ENCODE measurements at regions of chr1 and their contacts with region 1.

Region 1: DNA sequence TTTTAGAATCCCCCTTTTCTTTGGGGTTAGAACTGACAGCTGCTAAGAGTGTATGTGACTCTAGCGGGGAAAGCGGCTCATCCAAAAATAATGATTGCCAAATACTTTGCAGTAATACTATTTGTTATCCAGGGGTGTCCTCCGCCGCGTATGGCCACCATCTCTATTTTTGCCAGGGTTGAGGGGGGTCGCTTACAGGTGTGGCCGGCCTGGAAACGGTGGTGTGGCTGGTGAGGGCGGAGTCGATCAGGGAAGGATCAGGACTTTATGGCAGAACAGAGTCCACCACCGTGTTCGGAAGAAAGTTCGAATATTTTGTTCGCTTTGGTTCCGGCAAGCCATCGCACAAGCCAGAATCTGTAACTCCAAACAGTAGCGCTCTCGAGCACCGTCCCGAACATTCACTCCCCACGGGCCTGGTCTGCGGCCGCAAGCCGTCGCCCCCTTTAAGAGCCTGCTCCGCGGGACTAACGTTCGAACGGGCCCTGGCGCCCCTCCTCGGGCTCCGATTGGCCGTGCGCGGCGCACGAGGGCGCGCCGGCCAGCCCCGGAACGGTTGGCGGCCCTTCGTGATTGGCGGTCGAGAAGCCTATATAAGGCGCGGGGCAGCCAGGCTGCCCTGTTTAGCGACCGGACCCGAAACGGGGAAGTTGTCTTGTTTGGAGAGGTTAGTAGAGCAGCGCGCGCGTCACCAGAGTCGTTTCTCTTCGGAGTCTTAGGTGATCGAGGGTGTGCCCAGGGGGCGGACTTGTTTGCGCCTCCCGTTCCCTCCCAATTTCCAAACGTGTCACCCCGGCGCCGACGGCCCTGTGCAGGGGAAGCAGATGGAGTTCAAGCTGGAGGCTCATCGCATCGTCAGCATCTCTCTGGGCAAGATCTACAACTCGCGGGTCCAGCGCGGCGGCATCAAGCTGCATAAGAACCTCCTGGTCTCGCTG is at the start of gene IER5:
- DNase-seq: peak; percentile 96
- H3K4me3 ChIP-seq: peak within 1 kb of the TSS; percentile 58 to 74
- H3K27ac ChIP-seq: peak within 1 kb of the TSS; percentile 83 to 84
- H3K4me1 ChIP-seq: no peaks in the 10 kb centered on the region
- H3K27me3 ChIP-seq: no peaks in the 10 kb centered on the region
- CTCF ChIP-seq: peak in 3 of 4 experiments; percentile 14 to 25 (median 24)
- POLR2A ChIP-seq: peak; percentile 100
- total RNA-seq, gene IER5: 10.3 to 14.3 TPM

Region 2: DNA sequence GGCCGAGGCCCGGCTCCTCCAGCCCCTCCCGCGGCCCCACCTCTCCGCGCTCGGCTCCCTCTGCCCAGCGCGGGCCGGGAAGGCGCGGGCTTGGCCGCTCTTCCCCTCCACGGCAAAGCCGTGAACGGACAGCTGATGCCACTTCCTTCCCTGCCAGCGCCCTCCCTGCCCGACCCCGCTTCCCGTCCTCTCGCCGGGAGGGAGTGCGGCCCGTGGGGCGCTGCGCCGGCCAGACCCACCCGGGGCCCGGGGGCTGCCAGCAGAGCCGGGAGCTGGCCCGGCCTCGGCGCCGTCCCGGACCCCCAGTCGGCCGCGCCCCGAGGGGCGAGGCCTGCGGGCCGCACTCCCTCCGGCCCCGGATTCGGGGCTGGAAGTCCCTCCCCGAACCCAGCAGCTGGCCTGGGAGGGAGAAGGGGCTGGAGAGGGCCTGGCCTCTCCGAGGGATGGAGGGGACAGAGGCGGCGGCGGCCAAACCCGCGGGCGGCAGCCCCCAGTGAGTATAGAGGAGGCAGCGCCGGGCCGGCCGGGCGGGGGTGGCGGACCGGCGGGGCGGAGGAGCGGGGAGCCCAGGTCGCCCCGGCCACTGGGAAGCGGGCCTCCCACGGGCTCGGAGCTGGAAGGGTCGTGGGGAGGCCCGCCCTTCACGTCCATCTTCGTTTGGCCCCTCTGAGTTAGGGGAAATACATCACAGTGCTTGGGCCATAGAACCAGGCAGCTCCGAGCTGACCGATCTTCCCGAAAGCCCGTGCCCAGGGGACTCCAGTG is 175.4 kb before region 1 on chr1 and contains the start of gene KIAA1614:
- intact Hi-C with region 1: loop called (anchors 1 kb)
- DNase-seq: no peak
- H3K4me3 ChIP-seq: peak within 1 kb of the TSS; percentile 48 to 51
- H3K27ac ChIP-seq: peak within 1 kb of the TSS; percentile 76 to 79
- H3K4me1 ChIP-seq: no peaks in the 10 kb centered on the region
- H3K27me3 ChIP-seq: no peaks in the 10 kb centered on the region
- CTCF ChIP-seq: no peak
- POLR2A ChIP-seq: no peak
- total RNA-seq, gene KIAA1614: 3.7 to 6.4 TPM

Region 3: DNA sequence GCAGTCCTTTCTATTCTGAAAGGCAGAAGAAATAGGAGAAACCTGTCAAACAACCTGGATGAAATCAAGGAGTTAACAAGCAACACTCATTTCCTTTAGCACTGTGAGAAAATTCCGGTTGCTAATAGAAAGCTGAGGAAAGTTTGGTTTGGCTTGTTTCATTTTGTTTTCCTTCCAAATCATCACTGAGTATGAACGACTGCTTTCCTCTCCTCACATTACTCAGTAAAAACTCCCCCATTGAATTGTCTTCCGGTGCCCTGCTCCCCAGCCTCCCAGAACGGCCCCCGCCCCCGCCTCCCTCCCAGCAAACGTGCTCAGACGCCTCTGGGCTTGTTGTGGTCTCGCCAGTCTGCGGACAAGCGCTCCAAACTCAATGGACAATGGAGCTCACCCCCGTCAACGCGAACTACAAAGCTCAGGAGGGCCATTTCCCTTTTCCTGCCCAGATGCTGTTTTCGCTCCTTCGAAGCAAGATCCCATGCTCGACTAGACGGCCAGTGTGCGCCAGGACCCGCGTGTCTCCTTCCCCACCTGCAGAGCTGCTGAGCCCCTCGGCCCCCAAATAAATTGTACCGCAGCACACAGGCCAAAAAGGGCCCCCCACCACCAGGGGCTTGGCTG is 66.4 kb before region 1 on chr1:
- intact Hi-C with region 1: loop called (anchors 2 kb)
- DNase-seq: peak; percentile 70
- H3K4me3 ChIP-seq: peak overlapping the region; percentile 67 to 91
- H3K27ac ChIP-seq: peak overlapping the region; percentile 79 to 88
- H3K4me1 ChIP-seq: no peaks in the 10 kb centered on the region
- H3K27me3 ChIP-seq: no peaks in the 10 kb centered on the region
- CTCF ChIP-seq: no peak
- POLR2A ChIP-seq: peak; percentile 24

Region 4: DNA sequence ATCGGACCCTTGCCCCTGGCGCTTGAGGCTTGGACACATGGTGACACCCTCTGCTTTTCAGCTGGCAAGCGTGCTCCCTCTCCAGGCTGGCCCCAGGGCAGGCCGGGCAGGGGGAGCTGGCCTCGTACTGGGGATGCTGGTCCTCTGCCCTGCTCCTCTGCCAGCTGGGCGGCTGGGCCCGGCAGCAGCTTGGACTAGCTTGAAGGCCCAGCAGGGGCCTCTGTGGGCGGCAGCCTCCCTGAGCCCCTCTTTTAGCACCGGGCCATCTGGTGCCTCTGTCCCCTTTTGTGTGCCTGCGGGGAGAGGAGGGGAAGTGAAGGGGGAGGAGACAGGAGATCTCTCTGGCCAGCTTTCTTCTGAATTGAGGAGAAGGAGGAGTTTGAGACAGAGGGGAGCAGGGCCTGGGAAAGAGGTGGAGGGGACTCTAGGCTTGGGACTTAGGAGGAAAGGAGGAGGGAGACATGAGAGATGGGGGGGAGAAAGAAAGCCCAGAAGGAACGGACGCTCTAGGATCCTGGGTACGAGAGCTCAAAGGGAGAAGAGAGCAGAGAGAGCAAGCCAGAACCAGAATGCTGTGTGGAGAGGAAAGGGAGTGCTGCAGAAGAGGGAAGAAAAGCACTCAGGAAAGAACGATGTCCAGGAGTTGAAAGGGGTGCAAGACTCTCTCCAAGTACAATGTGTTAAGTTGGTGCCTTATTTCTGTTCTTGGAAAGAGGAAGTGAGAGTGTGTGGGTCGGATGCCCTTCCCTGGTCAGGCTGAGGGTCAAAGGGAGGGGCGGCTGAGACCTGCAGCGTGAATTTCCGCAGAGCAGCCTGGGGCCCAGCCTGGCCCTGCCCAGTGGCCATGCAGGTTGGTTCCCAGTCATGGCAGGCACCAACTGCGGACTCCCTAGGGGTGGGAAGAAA is 40.5 kb after region 1 on chr1:
- intact Hi-C with region 1: no loop called
- DNase-seq: no peak
- H3K4me3 ChIP-seq: no peak overlapping the region
- H3K27ac ChIP-seq: no peak overlapping the region
- H3K4me1 ChIP-seq: no peaks in the 10 kb centered on the region
- H3K27me3 ChIP-seq: no peaks in the 10 kb centered on the region
- CTCF ChIP-seq: no peak
- POLR2A ChIP-seq: no peak

Region 5: DNA sequence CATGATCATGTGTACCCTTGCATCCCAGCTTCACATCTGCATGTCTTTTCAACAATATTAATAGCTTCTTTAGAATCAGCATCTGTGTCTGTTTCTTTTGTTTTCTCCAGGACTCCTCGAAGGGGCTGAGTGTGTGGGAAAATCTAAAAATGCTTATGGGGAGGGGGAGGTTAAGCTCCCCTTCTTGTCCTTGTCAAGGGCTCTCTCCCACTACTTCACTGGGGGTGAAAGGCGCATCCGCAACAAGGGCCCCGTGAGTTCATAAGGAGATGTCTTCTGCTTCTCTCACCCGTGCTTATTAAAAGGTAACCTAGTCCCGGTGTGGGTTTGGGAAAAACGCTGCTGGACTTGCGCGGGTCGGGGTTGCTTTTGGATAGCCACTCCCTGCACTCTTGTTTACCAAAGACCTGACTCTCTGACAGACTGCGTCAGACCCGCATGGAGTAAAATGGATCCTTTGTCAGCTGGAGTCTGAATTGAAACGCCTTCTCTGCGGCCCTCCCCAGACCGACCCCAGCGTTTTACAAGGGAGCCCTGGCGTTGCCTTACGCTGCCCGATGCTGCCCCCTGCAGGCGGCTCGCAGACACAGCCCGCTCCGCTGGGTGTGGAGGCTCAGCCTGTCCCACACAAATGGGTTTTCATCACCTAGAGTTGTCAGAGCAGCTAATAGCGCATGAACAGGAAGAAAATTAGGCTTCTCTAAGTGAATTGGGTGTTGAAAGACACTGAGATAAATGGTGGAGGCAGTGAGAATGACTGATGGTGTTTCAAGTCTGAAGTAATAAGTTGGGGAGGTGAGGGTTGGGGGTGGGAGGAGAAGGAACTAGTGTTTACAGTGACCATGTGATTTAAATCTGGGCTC is 54.0 kb after region 1 on chr1:
- intact Hi-C with region 1: loop called (anchors 1 kb)
- DNase-seq: peak; percentile 70
- H3K4me3 ChIP-seq: peak overlapping the region in 1 of 2 donors; percentile 16
- H3K27ac ChIP-seq: no peak overlapping the region
- H3K4me1 ChIP-seq: no peaks in the 10 kb centered on the region
- H3K27me3 ChIP-seq: no peaks in the 10 kb centered on the region
- CTCF ChIP-seq: peak; percentile 95 to 99 (median 98)
- POLR2A ChIP-seq: no peak

Measured in prostate gland (tissue), 2 donors.